CD14-positive monocyte (primary cell): ENCODE measurements at regions of chr4 and their contacts with region 1.

Region 1: DNA sequence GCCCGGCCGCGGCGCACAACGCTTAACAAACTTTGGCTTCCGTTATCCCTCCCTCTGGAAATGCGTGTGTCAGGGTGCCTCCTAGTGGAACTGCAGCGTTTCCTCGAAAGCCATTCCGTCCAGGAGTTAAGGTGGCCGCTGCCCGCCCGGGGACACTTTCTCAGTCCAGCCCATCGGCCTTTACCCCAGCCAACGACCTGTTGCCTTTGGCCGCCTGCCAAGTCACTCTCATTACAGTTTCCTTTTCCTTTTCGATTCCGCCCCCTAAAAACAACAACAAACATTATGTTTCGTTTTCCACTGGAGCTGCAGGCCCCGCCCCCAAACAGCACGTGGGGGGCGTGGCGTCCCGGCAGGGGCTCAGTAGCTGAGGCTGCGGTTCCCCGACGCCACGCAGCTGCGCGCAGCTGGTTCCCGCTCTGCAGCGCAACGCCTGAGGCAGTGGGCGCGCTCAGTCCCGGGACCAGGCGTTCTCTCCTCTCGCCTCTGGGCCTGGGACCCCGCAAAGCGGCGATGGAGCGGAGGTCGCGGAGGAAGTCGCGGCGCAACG is at the start of gene HERC5:
- DNase-seq: peak; percentile 91 to 93 (median 92)
- H3K4me3 ChIP-seq: peak within 1 kb of the TSS; percentile 62 to 94 (median 90)
- H3K4me3 Mint-ChIP-seq: peak within 1 kb of the TSS; percentile 100
- H3K27ac ChIP-seq: peak within 1 kb of the TSS; percentile 58 to 79
- H3K27ac Mint-ChIP-seq: peak within 1 kb of the TSS; percentile 94 to 99 (median 97)
- H3K4me1 ChIP-seq: peaks cover 11 to 20% of the 10 kb centered on the region in 2 donors
- H3K4me1 Mint-ChIP-seq: peaks cover 17% of the 10 kb centered on the region
- H3K27me3 ChIP-seq: no peaks in the 10 kb centered on the region
- H3K27me3 Mint-ChIP-seq: no peaks in the 10 kb centered on the region
- CTCF ChIP-seq: peak; percentile 29
- polyA plus RNA-seq, gene HERC5: 2.9 to 10.4 (median 8.1) TPM

Region 2: DNA sequence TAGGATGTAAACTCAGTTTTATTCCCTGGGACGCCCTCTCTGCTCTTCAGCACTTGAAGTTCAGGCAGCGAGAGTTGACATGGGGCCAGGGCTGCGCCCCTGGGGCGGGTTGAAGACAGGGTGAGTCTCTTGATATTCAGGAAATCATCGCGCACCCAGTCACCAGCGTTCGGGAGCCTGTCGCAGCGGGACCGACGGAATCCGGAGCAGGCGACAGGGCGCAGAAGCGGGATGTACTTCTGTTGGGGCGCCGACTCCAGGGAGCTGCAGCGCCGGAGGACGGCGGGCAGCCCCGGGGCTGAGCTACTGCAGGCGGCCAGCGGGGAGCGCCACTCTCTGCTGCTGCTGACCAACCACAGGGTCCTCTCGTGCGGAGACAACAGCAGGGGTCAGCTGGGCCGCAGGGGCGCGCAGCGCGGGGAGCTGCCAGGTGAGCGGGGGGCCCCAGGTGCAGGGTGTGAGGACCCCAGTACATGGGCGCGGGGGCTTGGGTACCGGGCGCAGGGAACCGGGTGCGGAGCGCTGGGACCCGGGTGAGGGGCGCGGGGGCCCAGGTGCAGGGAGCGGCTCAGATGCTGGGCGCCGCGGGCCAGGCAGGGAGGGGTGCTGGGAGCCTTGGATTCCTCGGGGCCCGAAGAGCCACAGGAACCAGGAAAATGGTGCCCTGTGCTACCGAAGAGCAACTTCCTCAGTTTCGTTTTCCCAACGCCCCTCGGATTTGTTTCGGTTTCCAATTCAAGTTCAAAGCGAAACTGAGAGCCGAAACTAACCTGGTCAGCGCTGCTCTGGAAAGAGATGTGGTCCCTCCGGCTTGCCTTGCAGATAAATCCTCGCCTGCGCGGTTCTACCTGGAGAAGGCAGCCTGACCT is 77.9 kb before region 1 on chr4 and contains the start of gene HERC6:
- intact Hi-C with region 1: loop called (anchors 5 kb)
- DNase-seq: peak; percentile 88 to 92 (median 91)
- H3K4me3 ChIP-seq: peak within 1 kb of the TSS; percentile 56 to 99 (median 68)
- H3K4me3 Mint-ChIP-seq: peak within 1 kb of the TSS; percentile 93 to 97
- H3K27ac ChIP-seq: peak within 1 kb of the TSS; percentile 63 to 98
- H3K27ac Mint-ChIP-seq: peak within 1 kb of the TSS; percentile 84 to 95 (median 91)
- H3K4me1 ChIP-seq: peaks cover 13 to 19% of the 10 kb centered on the region in 2 donors
- H3K4me1 Mint-ChIP-seq: peaks cover 24% of the 10 kb centered on the region
- H3K27me3 ChIP-seq: no peaks in the 10 kb centered on the region
- H3K27me3 Mint-ChIP-seq: peaks cover 1 to 6% (median 2%) of the 10 kb centered on the region in 3 donors
- CTCF ChIP-seq: peak; percentile 88
- polyA plus RNA-seq, gene HERC6: 4.1 to 9.4 (median 6.1) TPM

Region 3: DNA sequence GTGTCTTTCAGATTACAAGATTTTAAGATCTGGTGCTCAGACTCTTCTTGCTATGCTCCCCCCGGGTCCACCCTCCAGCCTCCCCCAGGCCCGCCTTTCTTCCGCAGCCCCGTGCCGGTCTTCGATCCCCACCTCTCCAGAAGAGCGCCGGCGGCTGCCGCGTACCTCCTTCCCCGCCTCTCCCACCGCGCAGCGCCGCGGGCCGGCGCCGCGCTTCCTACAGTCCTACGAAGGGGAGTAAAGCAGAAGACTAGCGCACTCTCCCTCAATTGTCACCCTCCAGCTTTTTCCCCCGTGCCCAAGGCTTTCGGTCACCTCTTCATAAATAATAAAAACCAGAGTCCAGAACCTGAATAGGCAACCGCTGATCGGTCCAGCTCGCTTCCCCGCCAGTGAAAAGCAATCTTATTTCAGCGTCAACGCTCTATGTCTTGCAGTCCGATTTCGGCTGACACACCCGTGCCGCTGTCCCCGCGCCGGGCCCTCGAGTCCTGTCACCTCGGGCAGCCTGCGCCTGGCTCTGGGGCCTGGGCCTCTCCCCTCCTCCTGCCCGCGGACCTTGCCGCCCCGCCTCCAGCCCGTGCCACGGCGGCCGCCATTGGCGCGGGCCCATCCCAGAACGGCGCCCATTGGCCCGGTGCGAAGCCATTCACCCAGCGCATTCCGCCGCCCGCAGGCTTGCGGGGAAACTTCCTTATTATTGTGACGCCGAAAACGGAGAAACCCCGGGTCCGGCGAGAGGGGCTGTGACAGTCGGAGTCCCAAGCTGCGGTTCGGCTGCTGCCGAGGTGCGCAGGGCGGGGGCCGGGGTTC is 135.2 kb after region 1 on chr4 and contains the start of gene HERC3:
- intact Hi-C with region 1: loop called (anchors 5 to 10 kb)
- DNase-seq: peak; percentile 88 to 92 (median 92)
- H3K4me3 ChIP-seq: peak within 1 kb of the TSS; percentile 76 to 82 (median 78)
- H3K4me3 Mint-ChIP-seq: peak within 1 kb of the TSS; percentile 95 to 97
- H3K27ac ChIP-seq: peak within 1 kb of the TSS; percentile 82 to 96
- H3K27ac Mint-ChIP-seq: peak within 1 kb of the TSS; percentile 90 to 97 (median 94)
- H3K4me1 ChIP-seq: peaks cover 18 to 22% of the 10 kb centered on the region in 2 donors
- H3K4me1 Mint-ChIP-seq: peaks cover 31% of the 10 kb centered on the region
- H3K27me3 ChIP-seq: no peaks in the 10 kb centered on the region
- H3K27me3 Mint-ChIP-seq: peaks cover 3 to 10% (median 6%) of the 10 kb centered on the region in 3 donors
- CTCF ChIP-seq: no peak
- polyA plus RNA-seq, gene HERC3: 30.5 to 36.9 (median 36.7) TPM

Region 4: GRCh38 chr4:88720451-88721428 is 263.9 kb after region 1 on chr4:
- intact Hi-C with region 1: no loop called
- DNase-seq: no peak
- H3K4me3 ChIP-seq: no peak overlapping the region
- H3K4me3 Mint-ChIP-seq: no peak overlapping the region
- H3K27ac ChIP-seq: peak overlapping the region in 1 of 2 donors; percentile 17
- H3K27ac Mint-ChIP-seq: peak overlapping the region in 4 of 7 donors; percentile 13 to 49 (median 30)
- H3K4me1 ChIP-seq: peaks cover 12 to 17% of the 10 kb centered on the region in 2 donors
- H3K4me1 Mint-ChIP-seq: peaks cover 18% of the 10 kb centered on the region
- H3K27me3 ChIP-seq: no peaks in the 10 kb centered on the region
- H3K27me3 Mint-ChIP-seq: no peaks in the 10 kb centered on the region
- CTCF ChIP-seq: no peak